Psoas muscle (tissue), 8 donors: ENCODE measurements at regions of chr17 and their contacts with region 1.

Region 1: GRCh38 chr17:5584383-5585286 is at the start of gene NLRP1:
- DNase-seq: peak; percentile 92 to 93
- ATAC-seq: peak; percentile 43 to 82 (median 66)
- H3K4me3 ChIP-seq: peak within 1 kb of the TSS; percentile 63
- H3K27ac ChIP-seq: peak within 1 kb of the TSS; percentile 73
- H3K4me1 ChIP-seq: peaks cover 21% of the 10 kb centered on the region
- H3K27me3 ChIP-seq: no peaks in the 10 kb centered on the region
- CTCF ChIP-seq: no peak
- total RNA-seq, gene NLRP1: 2.8 to 5.7 (median 3.6) TPM

Region 2: GRCh38 chr17:5630434-5630833 is 45.8 kb after region 1 on chr17:
- intact Hi-C with region 1: no loop called
- DNase-seq: no peak
- ATAC-seq: no peak
- H3K4me3 ChIP-seq: no peak overlapping the region
- H3K27ac ChIP-seq: no peak overlapping the region
- H3K4me1 ChIP-seq: no peaks in the 10 kb centered on the region
- H3K27me3 ChIP-seq: peaks cover 0 to 46% (median 6%) of the 10 kb centered on the region in 3 donors
- CTCF ChIP-seq: no peak

Region 3: GRCh38 chr17:5706577-5707216 is 122.1 kb after region 1 on chr17:
- intact Hi-C with region 1: loop called (anchors 1 to 5 kb)
- DNase-seq: peak; percentile 59 to 71
- ATAC-seq: peak; percentile 67 to 86 (median 83)
- H3K4me3 ChIP-seq: no peak overlapping the region
- H3K27ac ChIP-seq: no peak overlapping the region
- H3K4me1 ChIP-seq: no peaks in the 10 kb centered on the region
- H3K27me3 ChIP-seq: peaks cover 0 to 12% (median 2%) of the 10 kb centered on the region in 3 donors
- CTCF ChIP-seq: peak; percentile 71

Region 4: GRCh38 chr17:6421700-6422604 is 837.3 kb after region 1 on chr17:
- intact Hi-C with region 1: loop called (anchors 1 to 2 kb)
- DNase-seq: peak; percentile 76 to 87
- ATAC-seq: peak; percentile 85 to 91 (median 86)
- H3K4me3 ChIP-seq: no peak overlapping the region
- H3K27ac ChIP-seq: no peak overlapping the region
- H3K4me1 ChIP-seq: no peaks in the 10 kb centered on the region
- H3K27me3 ChIP-seq: peaks cover 0 to 14% (median 0%) of the 10 kb centered on the region in 3 donors
- CTCF ChIP-seq: peak; percentile 83

Region 5: DNA sequence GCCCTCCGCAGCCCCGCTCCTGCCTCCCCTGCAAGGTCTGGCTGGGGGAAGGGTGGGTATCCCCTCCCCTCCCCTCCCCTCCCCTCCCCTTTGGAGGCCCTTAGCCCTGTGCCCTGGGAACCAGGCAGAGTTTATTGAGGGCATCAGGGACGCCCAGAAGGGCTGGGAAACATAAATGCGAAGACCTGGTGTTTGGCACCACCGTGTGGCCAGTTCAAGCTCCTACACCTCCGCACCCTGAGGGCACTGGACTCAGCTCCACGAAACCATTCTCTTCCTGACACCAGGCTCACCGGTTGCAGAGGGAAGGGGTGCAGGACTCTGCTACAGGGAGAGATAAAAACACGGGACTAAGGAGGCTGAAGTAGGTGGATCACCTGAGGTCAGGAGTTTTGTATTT is 851.3 kb after region 1 on chr17:
- intact Hi-C with region 1: loop called in 1 of 2 experiments (anchors 5 kb)
- DNase-seq: peak; percentile 54 to 73
- ATAC-seq: peak; percentile 87 to 93 (median 90)
- H3K4me3 ChIP-seq: no peak overlapping the region
- H3K27ac ChIP-seq: no peak overlapping the region
- H3K4me1 ChIP-seq: no peaks in the 10 kb centered on the region
- H3K27me3 ChIP-seq: peaks cover 0 to 16% (median 3%) of the 10 kb centered on the region in 3 donors
- CTCF ChIP-seq: peak; percentile 79